Activated naive CD4-positive, alpha-beta T cell treated with anti-CD3 and anti-CD28 coated beads for 36 hours (primary cell): ENCODE measurements at regions of chr2 and their contacts with region 1.

Region 1: DNA sequence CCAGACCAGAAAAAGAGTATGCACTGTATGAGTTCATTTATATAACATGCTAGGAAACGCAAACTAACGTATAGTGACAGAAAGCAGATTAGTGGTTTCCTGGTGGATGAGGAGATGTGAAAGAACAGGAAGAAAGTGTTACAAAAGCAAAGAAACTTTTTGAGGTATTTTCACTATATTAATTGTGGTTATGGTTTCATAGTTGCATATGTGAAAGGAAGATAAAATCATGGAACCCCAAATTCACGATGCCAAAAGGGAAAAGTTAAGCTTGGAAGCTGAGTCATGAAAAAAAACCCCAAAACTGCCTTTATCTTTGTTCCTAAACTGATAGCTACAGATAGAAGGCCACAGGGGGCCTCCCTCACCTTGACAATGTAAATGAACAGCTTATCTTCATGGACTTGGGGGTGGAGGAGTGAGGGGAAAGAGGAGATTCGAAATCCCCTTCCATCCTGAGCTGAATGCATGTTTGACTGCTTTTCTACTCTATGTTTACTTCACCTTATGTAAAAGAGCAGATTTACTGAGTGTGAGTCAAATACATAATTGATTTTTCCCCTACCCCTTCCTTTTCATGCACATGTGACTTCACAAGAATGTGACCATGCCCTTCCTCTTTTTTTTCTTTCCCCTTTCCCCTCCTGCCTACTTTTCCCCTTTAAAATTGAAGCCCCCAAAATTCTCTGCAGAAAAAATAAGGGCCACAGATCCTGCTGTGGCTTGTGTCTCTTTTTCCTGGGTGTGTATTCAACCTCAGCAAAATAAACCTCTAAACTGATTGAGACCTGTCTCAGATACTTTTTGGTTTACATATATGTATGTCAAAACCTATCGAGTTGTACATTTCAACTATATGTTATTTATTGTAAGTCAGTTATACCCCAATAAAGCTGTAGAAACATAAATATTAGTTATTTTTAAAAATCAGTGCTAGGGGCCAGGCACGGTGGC is 100.1 kb upstream of the TLK1 start:
- DNase-seq: peak; percentile 70
- H3K4me3 Mint-ChIP-seq: no peak overlapping the region
- H3K27ac Mint-ChIP-seq: peak overlapping the region; percentile 44
- H3K4me1 Mint-ChIP-seq: peaks cover 35% of the 10 kb centered on the region
- H3K27me3 Mint-ChIP-seq: no peaks in the 10 kb centered on the region

Region 2: DNA sequence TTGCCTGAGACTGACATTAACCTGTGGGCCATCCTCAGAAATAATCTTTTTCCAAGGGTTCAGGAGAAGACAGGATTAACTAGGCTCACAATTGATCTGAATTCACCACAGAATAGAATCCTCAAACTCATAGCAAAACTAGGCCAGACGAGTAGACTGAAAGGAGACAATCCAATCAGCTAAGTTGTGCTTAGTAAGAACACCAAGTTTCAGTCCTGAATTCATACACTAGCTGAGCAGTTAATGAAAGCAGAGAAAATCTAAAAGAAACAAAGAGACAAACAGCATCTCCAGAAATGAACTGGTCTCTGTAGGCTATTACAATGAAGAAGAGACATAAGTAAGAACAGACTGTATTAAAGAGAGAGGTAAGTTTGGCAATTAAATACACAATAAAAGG is 242.2 kb before region 1 on chr2:
- CTCF ChIA-PET with region 1: no interaction called
- intact Hi-C with region 1: loop called (anchors 1 kb)
- DNase-seq: no peak
- H3K4me3 Mint-ChIP-seq: no peak overlapping the region
- H3K27ac Mint-ChIP-seq: peak overlapping the region; percentile 53
- H3K4me1 Mint-ChIP-seq: peaks cover 36% of the 10 kb centered on the region
- H3K27me3 Mint-ChIP-seq: no peaks in the 10 kb centered on the region

Region 3: DNA sequence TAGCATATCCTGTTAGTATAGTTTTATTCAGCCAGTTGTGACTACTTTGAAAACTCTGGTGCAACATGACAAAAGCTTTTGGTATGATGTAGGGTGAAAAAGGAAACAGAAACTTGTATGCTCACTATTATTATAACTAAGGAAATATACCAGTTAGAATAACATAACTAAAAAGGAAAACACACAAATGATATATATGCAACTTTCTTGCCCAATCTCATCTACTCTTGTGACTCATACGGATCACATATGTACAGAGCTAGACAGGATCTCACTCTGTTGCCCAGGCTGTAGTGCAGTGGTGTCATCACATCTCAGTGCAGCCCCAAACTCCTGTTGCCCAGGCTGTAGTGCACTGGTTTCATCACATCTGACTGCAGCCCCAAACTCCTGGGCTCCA is 87.7 kb before region 1 on chr2:
- CTCF ChIA-PET with region 1: no interaction called
- intact Hi-C with region 1: loop called (anchors 1 kb)
- DNase-seq: peak; percentile 57
- H3K4me3 Mint-ChIP-seq: no peak overlapping the region
- H3K27ac Mint-ChIP-seq: no peak overlapping the region
- H3K4me1 Mint-ChIP-seq: peaks cover 14% of the 10 kb centered on the region
- H3K27me3 Mint-ChIP-seq: no peaks in the 10 kb centered on the region

Region 4: GRCh38 chr2:171244970-171245782 is 15.6 kb before region 1 on chr2:
- CTCF ChIA-PET with region 1: interaction called, 7 read pairs
- intact Hi-C with region 1: loop called (anchors 1 kb)
- DNase-seq: peak; percentile 32
- H3K4me3 Mint-ChIP-seq: no peak overlapping the region
- H3K27ac Mint-ChIP-seq: no peak overlapping the region
- H3K4me1 Mint-ChIP-seq: peaks cover 40% of the 10 kb centered on the region
- H3K27me3 Mint-ChIP-seq: no peaks in the 10 kb centered on the region

Region 5: GRCh38 chr2:171325886-171326585 is 65.3 kb after region 1 on chr2:
- CTCF ChIA-PET with region 1: interaction called, 3 read pairs
- intact Hi-C with region 1: loop called (anchors 1 kb)
- DNase-seq: no peak
- H3K4me3 Mint-ChIP-seq: no peak overlapping the region
- H3K27ac Mint-ChIP-seq: peak overlapping the region; percentile 32
- H3K4me1 Mint-ChIP-seq: peaks cover 41% of the 10 kb centered on the region
- H3K27me3 Mint-ChIP-seq: no peaks in the 10 kb centered on the region

Region 6: GRCh38 chr2:171433763-171434670 is 173.3 kb after region 1 on chr2 and contains the starts of genes DCAF17 and METTL8:
- CTCF ChIA-PET with region 1: no interaction called
- intact Hi-C with region 1: loop called (anchors 1 kb)
- DNase-seq: peak; percentile 96
- H3K4me3 Mint-ChIP-seq: peak within 1 kb of the TSS; percentile 86
- H3K27ac Mint-ChIP-seq: peak within 1 kb of the TSS; percentile 94
- H3K4me1 Mint-ChIP-seq: peaks cover 54% of the 10 kb centered on the region
- H3K27me3 Mint-ChIP-seq: no peaks in the 10 kb centered on the region
- total RNA-seq, gene DCAF17: 21.1 to 21.3 TPM
- total RNA-seq, gene METTL8: 32.9 to 34.5 TPM